Activated CD4-positive, alpha-beta T cell treated with anti-CD3 and anti-CD28 coated beads for 36 hours (primary cell): ENCODE measurements at regions of chr10 and their contacts with region 1.

Region 1: GRCh38 chr10:91758303-91759146 is 39.7 kb upstream of the TNKS2 start:
- DNase-seq: no peak
- ATAC-seq: peak; percentile 81
- H3K4me3 Mint-ChIP-seq: no peak overlapping the region
- H3K27ac Mint-ChIP-seq: no peak overlapping the region
- H3K4me1 Mint-ChIP-seq: peaks cover 3% of the 10 kb centered on the region
- H3K27me3 Mint-ChIP-seq: peaks cover 21% of the 10 kb centered on the region

Region 2: DNA sequence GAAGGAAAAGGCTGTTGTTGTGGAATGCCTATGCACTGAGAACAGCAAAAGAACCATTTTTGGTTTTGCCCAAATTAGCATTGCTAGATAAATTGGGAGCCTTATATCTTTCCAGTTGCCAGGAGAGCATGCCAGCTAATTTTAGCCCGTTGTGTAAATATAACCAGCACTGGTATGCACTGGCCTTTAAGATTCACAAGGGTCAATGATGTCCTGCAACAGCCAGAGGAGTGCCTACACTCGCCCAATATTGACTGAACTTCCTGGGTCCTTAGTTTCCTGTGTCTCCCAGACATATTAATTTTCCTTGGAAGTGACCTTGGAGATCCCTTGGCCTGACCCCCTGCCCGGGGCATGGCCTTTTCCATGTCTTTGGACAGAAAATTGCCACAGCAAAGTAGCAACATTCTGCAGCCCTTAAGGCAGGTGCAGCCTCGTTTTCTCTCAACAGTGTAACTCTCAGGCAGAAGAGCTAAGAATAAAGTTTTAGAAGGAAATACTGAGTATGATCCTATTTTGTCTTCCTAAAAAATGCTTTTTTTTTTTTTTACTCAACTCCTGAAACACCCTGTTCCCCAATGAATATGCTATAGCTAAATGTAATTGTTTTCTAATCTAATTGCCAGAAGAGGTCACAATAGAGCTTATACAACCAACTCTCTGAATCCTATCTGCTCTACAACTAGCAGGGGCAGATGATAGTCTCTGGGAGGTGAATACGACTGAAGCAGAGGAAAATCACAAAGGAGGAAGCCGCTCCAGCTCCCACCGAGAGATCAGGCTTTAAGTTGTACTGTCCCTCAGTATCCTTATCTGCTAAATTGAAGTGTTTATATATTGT is 670.0 kb before region 1 on chr10:
- CTCF ChIA-PET with region 1: no interaction called
- POLR2A ChIA-PET with region 1: no interaction called
- intact Hi-C with region 1: no loop called
- DNase-seq: no peak
- ATAC-seq: no peak
- H3K4me3 Mint-ChIP-seq: no peak overlapping the region
- H3K27ac Mint-ChIP-seq: no peak overlapping the region
- H3K4me1 Mint-ChIP-seq: no peaks in the 10 kb centered on the region
- H3K27me3 Mint-ChIP-seq: no peaks in the 10 kb centered on the region

Region 3: DNA sequence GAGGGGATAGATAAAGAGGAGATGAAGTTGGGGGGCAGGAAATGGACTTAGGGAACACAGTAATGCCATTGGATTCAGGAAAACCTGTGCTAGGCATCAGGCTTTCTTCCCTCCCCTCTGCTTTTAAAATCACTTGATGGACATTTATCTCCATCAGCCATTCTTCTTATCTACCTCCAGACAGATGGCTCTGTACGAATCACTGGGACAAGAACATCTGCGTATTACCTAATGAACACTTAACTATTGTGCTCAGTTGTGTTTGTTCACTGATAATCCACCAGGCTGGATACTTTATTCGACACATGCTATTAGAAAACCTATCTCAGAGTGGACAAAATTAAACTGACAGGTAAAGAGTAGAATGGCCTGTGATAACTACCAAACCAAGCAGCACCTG is 79.7 kb after region 1 on chr10:
- CTCF ChIA-PET with region 1: interaction called, 4 read pairs
- POLR2A ChIA-PET with region 1: no interaction called
- intact Hi-C with region 1: loop called in 1 of 2 experiments (anchors 10 kb)
- DNase-seq: no peak
- ATAC-seq: no peak
- H3K4me3 Mint-ChIP-seq: no peak overlapping the region
- H3K27ac Mint-ChIP-seq: no peak overlapping the region
- H3K4me1 Mint-ChIP-seq: no peaks in the 10 kb centered on the region
- H3K27me3 Mint-ChIP-seq: no peaks in the 10 kb centered on the region

Region 4: GRCh38 chr10:91856637-91857036 is 98.1 kb after region 1 on chr10:
- CTCF ChIA-PET with region 1: interaction called, 4 read pairs
- POLR2A ChIA-PET with region 1: no interaction called
- intact Hi-C with region 1: loop called in 1 of 2 experiments (anchors 5 kb)
- DNase-seq: no peak
- ATAC-seq: no peak
- H3K4me3 Mint-ChIP-seq: no peak overlapping the region
- H3K27ac Mint-ChIP-seq: no peak overlapping the region
- H3K4me1 Mint-ChIP-seq: no peaks in the 10 kb centered on the region
- H3K27me3 Mint-ChIP-seq: no peaks in the 10 kb centered on the region

Region 5: GRCh38 chr10:92432596-92432995 is 674.1 kb after region 1 on chr10:
- CTCF ChIA-PET with region 1: no interaction called
- POLR2A ChIA-PET with region 1: no interaction called
- intact Hi-C with region 1: loop called (anchors 5 to 10 kb)
- DNase-seq: no peak
- ATAC-seq: no peak
- H3K4me3 Mint-ChIP-seq: no peak overlapping the region
- H3K27ac Mint-ChIP-seq: no peak overlapping the region
- H3K4me1 Mint-ChIP-seq: no peaks in the 10 kb centered on the region
- H3K27me3 Mint-ChIP-seq: no peaks in the 10 kb centered on the region